ENCODE measurements at regions of chr12 and their contacts with region 1.

Region 1: GRCh38 chr12:53500776-53501614 is at the start of gene TARBP2:
- DNase-seq: peak; percentile 97
- ATAC-seq: peak; percentile 87
- total RNA-seq, gene TARBP2: 10.1 TPM

Region 2: GRCh38 chr12:53321074-53321814 is 179.8 kb before region 1 on chr12 and contains the start of gene AAAS:
- intact Hi-C with region 1: loop called (anchors 5 kb)
- DNase-seq: peak; percentile 98
- ATAC-seq: peak; percentile 87
- total RNA-seq, gene AAAS: 39.4 TPM

Region 3: DNA sequence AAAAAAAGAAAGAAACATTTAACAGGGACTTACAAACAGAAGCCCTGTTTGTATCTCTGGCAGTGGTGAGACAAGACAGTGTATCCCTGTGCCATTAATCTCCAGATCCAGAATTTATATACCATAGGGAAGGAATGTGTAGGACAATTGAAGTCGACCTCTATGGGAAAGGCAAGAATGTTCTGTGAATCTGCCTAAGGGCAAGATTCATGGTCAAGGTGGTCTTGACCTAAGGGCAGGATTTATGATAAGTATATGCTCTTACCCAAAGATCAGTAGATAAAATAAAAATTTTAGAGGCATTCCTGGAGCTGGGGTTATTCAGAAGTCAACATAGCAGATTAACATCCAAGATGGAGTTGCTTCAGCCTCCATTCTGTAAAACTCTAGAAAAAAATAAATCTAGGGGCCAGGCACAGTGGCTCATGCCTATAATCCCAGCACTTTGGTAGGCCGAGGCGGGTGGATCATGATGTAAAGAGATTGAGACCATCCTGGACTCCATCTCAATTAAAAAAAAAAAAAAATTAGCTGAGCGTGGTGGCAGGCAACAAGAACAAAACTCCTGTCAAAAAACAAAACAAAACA is 142.1 kb before region 1 on chr12:
- intact Hi-C with region 1: no loop called
- DNase-seq: no peak
- ATAC-seq: no peak